ENCODE measurements at regions of chr1 and their contacts with region 1.

Region 1: GRCh38 chr1:114757455-114758250 is at the start of gene CSDE1:
- DNase-seq: peak; percentile 98
- total RNA-seq, gene CSDE1: 900 TPM

Region 2: DNA sequence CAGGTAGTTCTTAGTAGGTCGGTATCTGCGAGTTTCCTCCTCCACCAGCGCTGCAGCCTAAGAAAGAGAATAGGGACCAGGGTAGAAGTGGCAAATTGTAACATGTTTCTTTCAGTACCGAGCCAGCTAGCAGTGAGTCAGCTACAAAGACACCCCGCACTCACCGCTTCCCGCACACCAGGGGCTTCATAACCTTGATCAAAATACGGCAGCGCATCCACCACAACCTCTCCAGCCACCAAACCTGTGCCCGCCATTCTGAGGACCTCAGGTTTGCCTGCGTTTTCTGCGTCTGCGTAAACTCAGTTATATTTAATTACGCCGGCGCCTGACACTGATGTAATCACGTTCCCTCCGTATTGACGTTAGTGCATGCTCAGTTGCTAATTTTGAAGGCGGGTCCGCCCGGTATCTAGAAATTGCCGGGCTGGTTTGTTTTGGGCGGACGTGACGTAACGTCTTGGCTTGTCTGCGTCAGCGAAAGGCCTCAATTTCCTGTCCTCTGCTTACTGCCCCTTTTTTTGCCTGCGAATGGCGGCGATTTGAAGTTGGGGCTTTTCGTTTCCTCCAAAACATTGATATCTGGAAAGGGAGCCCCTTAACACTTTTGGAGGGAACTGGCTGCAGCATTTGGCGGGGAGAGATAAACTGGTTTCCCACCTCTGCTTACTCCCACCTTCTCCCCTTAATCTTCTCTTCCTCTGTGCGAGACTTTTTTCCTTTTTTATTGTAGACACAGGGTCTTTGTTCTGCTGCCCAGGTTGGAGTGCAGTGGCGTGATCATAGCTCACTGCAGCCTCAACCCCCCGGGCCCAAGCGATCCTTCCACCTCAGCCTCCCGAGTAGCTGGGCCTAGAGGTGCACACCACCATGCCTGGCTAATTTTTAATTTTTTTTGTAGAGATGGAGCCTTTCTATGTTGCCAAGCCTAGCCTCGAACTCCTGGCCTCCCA is 176.0 kb before region 1 on chr1 and contains the start of gene BCAS2:
- intact Hi-C with region 1: loop called (anchors 5 kb)
- DNase-seq: peak; percentile 97
- total RNA-seq, gene BCAS2: 36.1 TPM

Region 3: GRCh38 chr1:114794038-114794437 is 36.4 kb after region 1 on chr1:
- intact Hi-C with region 1: no loop called
- DNase-seq: no peak